Activated CD4-positive, alpha-beta T cell treated with anti-CD3 and anti-CD28 coated beads, Interleukin-2, amount 10 ng/mL, durations not matched to agents 7 days and 5 days (primary cell): ENCODE measurements at regions of chr3 and their contacts with region 1.

Region 1: DNA sequence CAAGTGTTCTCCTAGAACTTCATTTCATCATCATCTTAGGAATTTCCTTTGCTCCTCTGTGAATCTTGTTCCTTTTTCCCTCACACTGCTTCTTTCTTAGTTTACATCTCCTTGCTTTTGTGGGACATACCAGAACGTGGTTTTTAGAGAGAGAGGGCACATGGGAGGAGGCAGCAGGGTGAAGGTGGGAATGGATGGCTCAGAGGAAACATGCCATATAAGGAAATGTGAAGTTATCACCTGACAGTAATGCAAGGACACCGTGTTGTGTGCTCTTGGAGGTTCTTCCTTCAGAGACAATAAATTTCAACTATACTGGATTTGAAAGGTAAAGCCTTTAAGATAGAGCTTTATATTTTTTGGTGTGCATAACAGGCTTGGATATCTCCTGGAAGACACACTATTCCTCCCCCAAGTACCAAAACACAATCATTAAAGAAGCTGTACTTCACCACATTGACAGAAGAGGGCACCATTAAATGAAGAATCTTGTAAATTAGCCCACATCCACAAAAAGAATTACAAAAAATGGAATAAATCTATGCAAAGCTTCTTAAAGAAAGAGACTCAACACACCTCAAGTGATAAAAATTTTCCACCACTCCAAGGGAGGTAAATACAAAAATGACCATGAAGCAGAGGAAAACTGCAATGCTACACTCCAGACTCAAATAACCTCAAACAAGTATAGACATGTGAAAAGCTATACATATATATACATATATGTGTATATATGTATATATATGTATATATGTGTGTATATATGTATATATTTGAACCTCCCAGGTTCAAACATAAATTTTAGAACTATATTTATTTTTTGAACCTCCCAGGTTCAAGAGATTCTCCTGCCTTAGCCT is 26.1 kb downstream of the RPL39L start:
- DNase-seq: peak; percentile 34
- H3K4me3 Mint-ChIP-seq: no peak overlapping the region
- H3K27ac Mint-ChIP-seq: no peak overlapping the region
- H3K4me1 Mint-ChIP-seq: peaks cover 7% of the 10 kb centered on the region
- H3K27me3 Mint-ChIP-seq: no peaks in the 10 kb centered on the region

Region 2: GRCh38 chr3:186930641-186931531 is 182.3 kb before region 1 on chr3:
- CTCF ChIA-PET with region 1: no interaction called
- POLR2A ChIA-PET with region 1: no interaction called
- DNase-seq: peak; percentile 81
- H3K4me3 Mint-ChIP-seq: peak overlapping the region; percentile 88
- H3K27ac Mint-ChIP-seq: peak overlapping the region; percentile 94
- H3K4me1 Mint-ChIP-seq: peaks cover 41% of the 10 kb centered on the region
- H3K27me3 Mint-ChIP-seq: no peaks in the 10 kb centered on the region

Region 3: DNA sequence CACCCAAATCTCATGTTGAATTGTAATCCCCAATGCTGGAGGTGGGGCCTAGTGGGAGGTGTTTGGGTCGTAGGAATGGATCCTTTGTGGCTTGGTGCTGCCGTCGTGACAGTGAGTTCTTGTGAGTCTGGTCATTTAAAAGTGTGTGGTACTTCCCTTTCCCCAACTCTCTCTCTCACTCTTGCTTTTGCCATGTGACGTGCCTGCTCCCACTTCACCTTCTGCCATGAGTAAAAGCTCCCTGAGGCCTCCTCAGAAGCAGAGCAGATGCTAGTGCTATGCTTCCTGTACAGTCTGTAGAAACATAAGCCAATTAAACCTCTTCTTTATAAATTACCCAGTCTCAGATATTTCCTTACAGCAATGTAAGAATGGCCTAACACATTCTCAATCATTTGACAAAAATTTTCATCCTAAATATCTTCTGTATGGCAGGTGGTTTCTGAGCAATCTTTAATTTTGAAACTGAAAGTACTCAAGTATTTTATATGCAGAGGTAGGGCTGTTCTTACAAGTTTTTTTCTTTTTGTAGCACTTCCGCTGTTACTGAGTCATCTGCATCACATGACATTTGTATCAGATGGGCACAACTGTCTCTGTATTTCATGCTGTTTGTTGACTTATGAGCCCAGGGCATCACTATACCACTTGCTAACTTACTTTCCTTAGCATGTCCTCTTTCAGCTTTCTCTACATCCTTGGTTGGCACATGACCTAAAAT is 17.3 kb after region 1 on chr3:
- CTCF ChIA-PET with region 1: interaction called, 10 read pairs
- POLR2A ChIA-PET with region 1: interaction called, 3 read pairs
- DNase-seq: peak; percentile 63
- H3K4me3 Mint-ChIP-seq: peak overlapping the region; percentile 53
- H3K27ac Mint-ChIP-seq: peak overlapping the region; percentile 93
- H3K4me1 Mint-ChIP-seq: peaks cover 50% of the 10 kb centered on the region
- H3K27me3 Mint-ChIP-seq: no peaks in the 10 kb centered on the region

Region 4: GRCh38 chr3:187139126-187139894 is 26.1 kb after region 1 on chr3 and contains the start of gene RPL39L:
- CTCF ChIA-PET with region 1: interaction called, 15 read pairs
- POLR2A ChIA-PET with region 1: interaction called, 3 read pairs
- DNase-seq: peak; percentile 92
- H3K4me3 Mint-ChIP-seq: peak within 1 kb of the TSS; percentile 82
- H3K27ac Mint-ChIP-seq: peak within 1 kb of the TSS; percentile 96
- H3K4me1 Mint-ChIP-seq: peaks cover 26% of the 10 kb centered on the region
- H3K27me3 Mint-ChIP-seq: no peaks in the 10 kb centered on the region
- total RNA-seq, gene RPL39L: 18.4 to 20.4 TPM

Region 5: DNA sequence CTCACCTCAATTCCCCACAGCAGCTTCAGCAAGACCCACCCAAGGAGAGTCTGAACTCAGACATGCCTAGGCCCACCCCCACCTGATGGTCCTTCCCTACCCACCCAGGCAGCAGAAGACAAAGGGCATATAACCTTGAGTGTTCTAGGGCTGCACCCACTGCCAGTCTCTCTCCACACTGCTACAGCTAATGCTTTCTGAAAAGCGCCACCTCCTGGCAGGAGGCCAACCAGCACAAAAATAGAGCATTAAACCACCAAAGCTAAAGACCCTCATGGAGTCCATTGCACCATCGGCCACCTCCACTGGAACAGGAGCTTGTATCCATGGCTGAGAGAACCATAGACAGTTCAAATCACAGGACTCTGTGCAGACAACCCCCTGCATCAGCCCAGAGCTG is 37.4 kb after region 1 on chr3:
- CTCF ChIA-PET with region 1: interaction called, 31 read pairs
- POLR2A ChIA-PET with region 1: no interaction called
- DNase-seq: peak; percentile 59
- H3K4me3 Mint-ChIP-seq: no peak overlapping the region
- H3K27ac Mint-ChIP-seq: no peak overlapping the region
- H3K4me1 Mint-ChIP-seq: peaks cover 3% of the 10 kb centered on the region
- H3K27me3 Mint-ChIP-seq: peaks cover 41% of the 10 kb centered on the region

Region 6: DNA sequence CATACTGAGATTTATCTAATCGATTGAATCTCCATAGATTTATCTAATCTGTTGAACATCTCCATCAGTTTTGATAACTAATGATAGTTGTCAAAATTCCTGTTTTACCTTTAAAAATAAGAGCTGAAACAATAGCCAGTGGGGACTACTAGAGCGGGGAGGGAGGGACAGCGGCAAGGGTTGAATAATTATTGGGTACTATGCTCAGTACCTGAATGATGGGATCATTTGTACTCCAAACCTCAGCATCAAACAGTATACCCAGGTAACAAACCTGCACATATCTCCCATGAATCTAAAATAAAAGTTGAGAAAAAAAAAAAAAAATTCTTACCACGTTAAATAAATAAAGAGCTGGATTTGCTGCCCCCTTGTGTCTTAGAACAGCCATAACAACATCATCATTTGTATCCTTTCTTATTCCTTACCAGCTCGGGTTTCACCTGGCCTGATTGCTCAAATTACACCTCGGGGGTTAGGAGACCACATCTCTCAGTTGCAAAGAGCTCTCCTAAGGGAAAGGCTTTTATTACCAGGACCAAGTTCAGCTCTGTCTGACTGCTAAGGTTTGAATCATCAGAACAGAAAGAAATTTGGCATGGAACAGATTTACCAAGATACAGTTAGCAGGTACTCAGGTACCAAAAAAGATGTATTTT is 51.9 kb after region 1 on chr3:
- CTCF ChIA-PET with region 1: interaction called, 32 read pairs
- POLR2A ChIA-PET with region 1: no interaction called
- DNase-seq: peak; percentile 65
- H3K4me3 Mint-ChIP-seq: no peak overlapping the region
- H3K27ac Mint-ChIP-seq: no peak overlapping the region
- H3K4me1 Mint-ChIP-seq: peaks cover 9% of the 10 kb centered on the region
- H3K27me3 Mint-ChIP-seq: peaks cover 14% of the 10 kb centered on the region

Region 7: GRCh38 chr3:187255314-187255713 is 142.2 kb after region 1 on chr3:
- CTCF ChIA-PET with region 1: no interaction called
- POLR2A ChIA-PET with region 1: no interaction called
- DNase-seq: no peak
- H3K4me3 Mint-ChIP-seq: no peak overlapping the region
- H3K27ac Mint-ChIP-seq: no peak overlapping the region
- H3K4me1 Mint-ChIP-seq: no peaks in the 10 kb centered on the region
- H3K27me3 Mint-ChIP-seq: peaks cover 7% of the 10 kb centered on the region